Activated CD4-positive, alpha-beta memory T cell treated with anti-CD3 and anti-CD28 coated beads for 36 hours (primary cell): ENCODE measurements at regions of chr4 and their contacts with region 1.

Region 1: DNA sequence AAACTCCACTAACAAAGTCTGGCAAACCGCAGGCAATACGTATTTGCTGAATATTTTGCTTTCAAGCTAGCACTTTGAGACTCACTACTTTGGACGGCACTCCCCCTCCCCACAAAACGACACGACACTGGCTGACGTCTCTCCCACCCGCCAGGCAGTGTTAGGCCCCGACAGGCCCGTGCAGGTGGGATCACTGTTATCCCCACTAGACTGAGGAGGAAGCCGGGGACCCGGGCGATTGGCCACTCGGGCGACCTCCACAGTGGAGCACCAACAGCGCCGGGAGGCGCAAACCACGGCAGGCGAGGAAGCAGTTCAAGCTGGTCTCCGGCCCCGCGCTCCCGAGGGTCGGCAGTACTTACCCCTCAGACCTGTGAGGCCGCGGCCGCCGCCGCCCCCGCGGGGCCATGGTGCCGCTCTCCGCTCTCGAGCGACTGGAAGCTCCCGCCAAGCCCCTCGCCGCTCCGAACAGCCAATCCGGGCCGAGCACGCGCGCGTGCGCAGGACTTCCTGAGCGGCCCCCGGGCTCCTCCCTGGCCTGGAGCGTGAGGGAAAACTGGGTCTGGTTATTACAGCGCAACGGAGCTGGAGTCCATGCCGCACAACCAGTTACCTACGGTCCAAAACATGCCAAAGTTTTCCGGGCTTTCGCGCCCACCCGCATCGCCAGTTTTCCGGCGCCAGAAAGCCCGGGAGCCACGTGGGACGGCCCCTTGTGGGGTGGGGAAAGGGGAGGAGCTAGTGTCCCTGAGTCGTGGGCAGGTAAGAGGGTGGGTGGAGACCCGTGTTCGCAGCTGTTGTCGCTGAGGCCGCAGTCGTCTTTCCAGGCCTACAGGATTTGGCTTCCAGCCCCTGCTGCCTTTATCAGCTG is at the start of gene CENPU:
- DNase-seq: peak; percentile 97
- H3K4me3 Mint-ChIP-seq: peak within 1 kb of the TSS; percentile 99
- H3K27ac Mint-ChIP-seq: peak within 1 kb of the TSS; percentile 88
- H3K4me1 Mint-ChIP-seq: peaks cover 24% of the 10 kb centered on the region
- H3K27me3 Mint-ChIP-seq: no peaks in the 10 kb centered on the region
- total RNA-seq, gene CENPU: 82.7 to 87.6 TPM

Region 2: DNA sequence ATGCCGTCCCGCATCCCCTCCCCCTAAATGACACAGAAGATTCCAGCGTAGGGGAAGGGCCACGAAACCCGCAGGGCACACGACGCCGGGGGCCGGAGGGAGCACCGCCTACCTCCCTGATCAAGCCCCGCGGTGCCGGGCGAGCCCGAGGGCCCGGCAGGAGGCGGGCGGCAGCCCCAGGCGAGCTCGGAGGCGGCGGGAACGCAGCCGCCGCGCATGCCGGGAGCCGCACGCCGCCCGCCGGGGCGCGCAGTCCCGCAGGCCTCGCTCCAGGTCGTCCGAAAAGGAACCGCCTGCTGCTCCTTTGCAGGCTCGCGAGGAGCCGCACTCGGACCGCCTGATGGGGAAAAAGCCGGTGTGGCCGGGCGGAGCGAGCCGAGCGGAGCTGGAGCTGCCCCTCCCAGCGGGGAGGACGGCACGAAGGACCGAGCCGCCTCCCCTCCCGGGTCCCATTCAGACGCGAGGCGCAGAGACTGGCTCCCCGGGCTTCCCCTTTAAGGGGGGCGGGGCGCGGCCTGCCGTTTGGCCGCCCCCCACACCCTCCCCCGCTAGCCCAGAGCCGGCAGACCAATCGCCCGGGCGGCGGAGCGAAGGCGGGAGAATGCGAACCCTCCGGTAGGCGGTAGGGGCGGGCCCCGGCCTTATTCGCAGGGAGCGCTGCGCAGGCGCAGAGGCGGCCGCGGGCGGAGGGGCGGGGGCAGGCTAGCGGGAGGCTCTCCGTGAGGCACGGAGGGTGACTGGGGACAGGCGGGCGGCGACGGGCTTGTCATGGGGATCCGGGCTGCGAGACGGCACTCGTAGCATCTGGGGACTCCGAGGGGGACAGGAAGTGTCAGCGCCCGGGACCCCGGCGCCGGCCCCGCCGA is 1229.6 kb before region 1 on chr4:
- CTCF ChIA-PET with region 1: no interaction called
- POLR2A ChIA-PET with region 1: no interaction called
- intact Hi-C with region 1: loop called (anchors 10 kb)
- DNase-seq: peak; percentile 99
- H3K4me3 Mint-ChIP-seq: peak overlapping the region; percentile 93
- H3K27ac Mint-ChIP-seq: peak overlapping the region; percentile 92
- H3K4me1 Mint-ChIP-seq: peaks cover 28% of the 10 kb centered on the region
- H3K27me3 Mint-ChIP-seq: no peaks in the 10 kb centered on the region

Region 3: DNA sequence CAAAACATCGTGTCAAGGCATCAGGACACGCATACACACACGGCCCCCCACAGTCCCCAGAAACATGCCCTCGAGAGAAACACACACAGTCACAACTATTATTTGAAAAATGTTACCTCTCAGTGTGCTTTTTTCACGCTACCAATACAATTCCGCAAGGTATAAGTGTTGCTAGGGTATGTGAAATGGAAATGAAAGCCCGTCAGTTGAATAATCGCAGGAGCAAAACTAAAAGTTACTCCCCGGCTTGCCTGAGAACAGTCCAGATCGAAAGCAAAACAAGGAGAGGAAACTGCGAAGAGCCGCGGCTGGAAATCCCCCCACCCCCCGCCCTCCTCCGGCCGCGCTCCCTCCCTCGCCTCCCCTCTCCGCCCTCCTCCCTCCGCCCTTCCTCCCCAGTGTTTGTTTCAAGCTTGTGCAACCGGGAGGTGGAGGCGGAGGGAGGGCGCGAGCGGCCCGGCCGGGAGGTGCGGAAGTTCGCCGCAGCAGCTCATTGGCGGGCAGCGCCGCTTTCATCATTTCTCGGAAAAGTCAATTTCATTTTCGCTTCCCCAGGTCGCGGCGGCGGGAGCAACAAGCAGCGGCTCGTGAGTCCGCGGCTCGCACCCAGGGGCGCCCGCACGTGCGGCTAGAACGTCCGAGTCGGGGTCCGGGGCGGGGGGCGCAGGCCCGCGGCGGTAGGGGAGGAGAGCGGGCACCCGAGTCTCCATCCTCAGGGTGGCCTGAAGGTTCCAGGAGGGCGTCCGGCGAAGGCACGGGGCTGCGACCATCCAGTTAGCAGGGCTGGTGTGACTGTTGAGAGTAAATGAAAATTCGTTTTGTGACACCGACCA is 259.4 kb before region 1 on chr4 and contains the start of gene IRF2:
- CTCF ChIA-PET with region 1: no interaction called
- POLR2A ChIA-PET with region 1: interaction called, 15 read pairs
- intact Hi-C with region 1: loop called (anchors 5 kb)
- DNase-seq: peak; percentile 99
- H3K4me3 Mint-ChIP-seq: peak within 1 kb of the TSS; percentile 99
- H3K27ac Mint-ChIP-seq: peak within 1 kb of the TSS; percentile 100
- H3K4me1 Mint-ChIP-seq: peaks cover 57% of the 10 kb centered on the region
- H3K27me3 Mint-ChIP-seq: no peaks in the 10 kb centered on the region
- total RNA-seq, gene IRF2: 48.1 to 50.9 TPM

Region 4: DNA sequence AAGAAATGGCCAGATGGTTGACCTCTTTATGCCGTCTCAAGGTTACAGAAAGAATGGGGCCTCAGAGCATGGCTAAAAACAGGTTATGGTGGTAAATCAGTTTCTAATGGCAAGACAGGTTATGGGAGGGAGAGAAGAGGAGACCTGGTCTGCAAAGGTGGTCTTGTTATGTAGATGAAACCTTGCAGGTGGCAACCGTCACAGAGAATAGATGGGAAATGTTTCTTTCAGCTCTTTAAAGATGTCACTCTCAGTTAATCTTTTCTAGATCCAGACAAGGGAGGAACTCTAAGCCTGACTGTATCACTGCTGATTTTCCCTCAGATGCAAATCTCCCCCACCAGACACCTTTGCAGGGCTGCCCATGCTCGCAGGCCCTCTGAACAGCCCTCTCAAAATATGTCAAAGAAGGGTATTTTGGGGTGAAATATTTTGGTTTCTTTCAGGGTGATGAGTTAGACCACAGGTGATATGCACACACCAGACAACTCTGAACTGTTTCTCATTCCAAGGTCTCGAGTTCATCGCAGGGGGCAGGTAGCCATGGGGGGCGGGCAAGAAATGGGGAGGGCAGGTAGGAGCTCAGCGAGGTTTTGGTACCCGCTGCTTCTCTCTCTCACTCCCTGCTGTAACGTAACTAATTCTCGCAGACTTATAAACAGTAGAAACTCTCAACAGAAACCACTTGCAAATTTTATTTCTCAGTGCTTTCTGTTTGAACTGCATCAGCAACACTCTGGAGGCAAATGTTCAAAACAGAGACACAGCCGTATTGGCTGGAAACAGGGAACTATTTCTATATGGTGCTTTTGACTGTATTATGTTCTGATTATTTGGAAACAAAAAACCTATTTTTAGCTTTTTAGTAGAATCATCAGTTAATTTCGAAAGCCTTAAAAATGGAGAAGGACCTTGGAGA is 117.0 kb before region 1 on chr4:
- CTCF ChIA-PET with region 1: no interaction called
- POLR2A ChIA-PET with region 1: no interaction called
- intact Hi-C with region 1: no loop called
- DNase-seq: no peak
- H3K4me3 Mint-ChIP-seq: no peak overlapping the region
- H3K27ac Mint-ChIP-seq: no peak overlapping the region
- H3K4me1 Mint-ChIP-seq: no peaks in the 10 kb centered on the region
- H3K27me3 Mint-ChIP-seq: no peaks in the 10 kb centered on the region

Region 5: GRCh38 chr4:184705692-184706091 is 28.2 kb before region 1 on chr4:
- CTCF ChIA-PET with region 1: interaction called, 3 read pairs
- POLR2A ChIA-PET with region 1: interaction called, 5 read pairs
- intact Hi-C with region 1: loop called (anchors 2 kb)
- DNase-seq: no peak
- H3K4me3 Mint-ChIP-seq: no peak overlapping the region
- H3K27ac Mint-ChIP-seq: peak overlapping the region; percentile 34
- H3K4me1 Mint-ChIP-seq: peaks cover 25% of the 10 kb centered on the region
- H3K27me3 Mint-ChIP-seq: no peaks in the 10 kb centered on the region

Region 6: DNA sequence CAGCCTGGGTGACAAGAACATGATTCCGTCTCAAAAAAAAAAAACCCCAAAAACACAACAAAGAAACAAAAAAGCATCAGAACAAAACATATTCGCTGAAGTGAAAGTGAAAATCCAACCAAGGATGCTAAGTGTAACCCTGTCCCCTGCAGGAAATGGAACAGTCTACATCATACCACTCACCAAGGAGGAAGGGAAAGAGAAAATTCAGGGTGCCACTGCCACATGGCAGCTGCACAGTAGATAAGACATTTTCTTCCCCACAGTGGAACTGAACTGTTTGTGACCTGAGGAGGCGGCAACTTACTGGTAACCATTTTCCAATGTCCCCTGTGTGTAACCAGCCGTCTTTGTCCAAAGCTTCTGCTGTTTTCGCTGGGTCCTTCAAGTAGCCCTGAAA is 28.2 kb after region 1 on chr4:
- CTCF ChIA-PET with region 1: no interaction called
- POLR2A ChIA-PET with region 1: interaction called, 6 read pairs
- intact Hi-C with region 1: loop called (anchors 1 kb)
- DNase-seq: peak; percentile 54
- H3K4me3 Mint-ChIP-seq: peak overlapping the region; percentile 28
- H3K27ac Mint-ChIP-seq: peak overlapping the region; percentile 78
- H3K4me1 Mint-ChIP-seq: peaks cover 14% of the 10 kb centered on the region
- H3K27me3 Mint-ChIP-seq: no peaks in the 10 kb centered on the region

Region 7: DNA sequence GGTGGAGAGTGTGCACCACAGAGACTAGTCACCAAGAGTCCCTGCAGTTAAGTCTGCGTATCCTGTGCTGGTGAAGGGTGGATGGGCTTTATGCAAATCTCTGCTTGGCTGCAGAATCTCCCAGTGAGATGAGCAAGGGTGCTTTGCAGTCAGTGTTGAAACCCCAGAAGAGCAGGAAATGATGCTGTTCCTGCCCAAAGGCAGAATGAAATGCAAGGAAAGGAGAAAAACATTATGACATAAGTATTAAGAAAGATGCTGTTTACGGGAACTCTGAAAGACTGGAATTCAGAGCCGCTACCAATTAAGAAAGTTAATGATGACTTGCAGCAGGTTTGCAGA is 117.3 kb after region 1 on chr4:
- CTCF ChIA-PET with region 1: no interaction called
- POLR2A ChIA-PET with region 1: no interaction called
- intact Hi-C with region 1: no loop called
- DNase-seq: peak; percentile 52
- H3K4me3 Mint-ChIP-seq: no peak overlapping the region
- H3K27ac Mint-ChIP-seq: no peak overlapping the region
- H3K4me1 Mint-ChIP-seq: peaks cover 19% of the 10 kb centered on the region
- H3K27me3 Mint-ChIP-seq: peaks cover 10% of the 10 kb centered on the region

Region 8: DNA sequence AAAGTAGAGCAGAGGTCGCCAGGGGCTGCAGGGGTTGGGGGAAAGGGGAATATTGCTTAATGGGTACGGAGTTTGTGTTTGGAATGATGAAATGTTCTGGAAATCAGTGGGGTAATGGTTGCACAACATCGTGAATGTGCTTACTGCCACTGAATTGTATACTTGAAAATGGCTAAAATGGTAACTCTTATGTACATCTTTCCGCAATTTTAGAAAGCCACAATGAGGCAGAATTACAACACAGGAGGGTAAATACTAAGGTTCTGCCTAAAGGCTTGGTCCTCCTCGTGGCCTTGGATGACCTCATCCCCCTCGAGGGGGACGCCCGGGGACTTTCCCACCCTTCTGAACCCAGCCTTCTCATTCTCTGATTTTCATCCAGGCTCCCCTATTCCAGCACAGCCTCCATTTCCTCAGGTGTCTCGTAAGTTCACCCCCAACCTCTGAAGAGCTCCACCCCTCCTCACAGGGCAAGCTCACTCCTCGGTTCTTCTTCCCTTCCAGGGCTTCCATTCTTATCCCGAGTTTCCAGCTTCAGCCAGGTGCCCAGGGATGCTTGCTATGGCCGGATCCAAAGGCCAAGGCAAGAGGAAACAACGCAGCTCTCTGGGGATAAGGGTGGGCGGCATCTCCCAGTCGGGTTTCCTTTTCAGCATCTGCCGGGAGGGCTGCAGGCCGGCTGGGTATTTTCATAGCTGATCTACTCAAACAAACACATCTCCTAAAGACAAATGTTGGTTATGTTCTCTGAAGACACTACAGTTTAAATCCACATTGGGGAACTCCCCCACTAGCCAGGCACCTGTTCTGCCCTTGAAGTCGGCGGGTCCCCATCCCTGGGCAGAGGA is 163.2 kb after region 1 on chr4:
- CTCF ChIA-PET with region 1: no interaction called
- POLR2A ChIA-PET with region 1: no interaction called
- intact Hi-C with region 1: no loop called
- DNase-seq: no peak
- H3K4me3 Mint-ChIP-seq: no peak overlapping the region
- H3K27ac Mint-ChIP-seq: no peak overlapping the region
- H3K4me1 Mint-ChIP-seq: no peaks in the 10 kb centered on the region
- H3K27me3 Mint-ChIP-seq: peaks cover 19% of the 10 kb centered on the region

Region 9: DNA sequence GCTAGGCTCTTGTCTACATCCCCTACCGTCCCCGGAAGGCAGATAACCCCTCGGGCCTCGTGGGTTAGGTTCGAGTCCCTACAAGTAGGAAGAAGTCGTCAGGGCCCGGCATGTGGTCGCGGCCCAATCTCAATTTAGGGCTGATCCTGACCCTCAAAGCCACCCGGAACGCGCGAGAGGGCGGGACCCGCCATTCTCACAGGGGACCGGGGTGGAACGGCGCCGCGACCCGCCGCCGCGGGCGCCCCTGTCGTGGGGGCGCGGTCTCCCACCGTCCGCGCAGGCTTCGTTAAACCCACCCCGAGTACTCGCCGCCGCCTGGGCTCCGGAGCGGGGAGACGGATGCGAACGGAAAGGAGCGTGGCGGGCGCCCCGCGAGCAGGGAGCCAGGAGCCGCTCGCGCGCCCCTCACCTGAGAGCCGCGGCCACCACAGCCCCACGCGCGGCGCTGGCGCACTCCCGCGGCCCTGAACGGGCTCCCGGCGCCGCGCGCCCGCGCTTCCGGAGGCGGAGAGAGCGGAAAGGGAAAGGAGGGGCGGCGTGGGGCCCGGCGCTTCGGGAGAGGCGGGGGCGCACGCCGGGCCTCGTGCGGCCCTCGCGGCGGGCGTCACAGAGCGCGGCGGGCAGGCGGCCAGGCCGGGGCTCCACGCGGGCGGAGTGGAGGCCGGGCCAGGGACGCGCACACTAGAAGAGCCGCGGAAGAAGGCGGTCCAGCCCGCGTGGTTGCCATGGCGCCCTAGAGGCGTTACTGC is 469.8 kb after region 1 on chr4 and contains the start of gene CFAP97:
- CTCF ChIA-PET with region 1: no interaction called
- POLR2A ChIA-PET with region 1: no interaction called
- intact Hi-C with region 1: loop called (anchors 5 kb)
- DNase-seq: peak; percentile 81
- H3K4me3 Mint-ChIP-seq: peak within 1 kb of the TSS; percentile 94
- H3K27ac Mint-ChIP-seq: peak within 1 kb of the TSS; percentile 97
- H3K4me1 Mint-ChIP-seq: peaks cover 48% of the 10 kb centered on the region
- H3K27me3 Mint-ChIP-seq: no peaks in the 10 kb centered on the region
- total RNA-seq, gene CFAP97: 47.5 to 48.6 TPM